ENCODE measurements at regions of chr12 and their contacts with region 1.

Region 1: GRCh38 chr12:57726151-57726883 is 12.2 kb downstream of the AGAP2 start:
- DNase-seq: peak; percentile 65 to 95
- H3K4me3 ChIP-seq: peak overlapping the region; percentile 51 to 82 (median 65)
- H3K27ac ChIP-seq: no peak overlapping the region
- H3K4me1 ChIP-seq: peaks cover 0 to 20% (median 13%) of the 10 kb centered on the region in 4 experiments; a peak in 5 of 7 replicates
- H3K27me3 ChIP-seq: peaks cover 19 to 70% (median 50%) of the 10 kb centered on the region in 4 experiments
- CTCF ChIP-seq: peak; percentile 70 to 85 (median 81)
- EP300 ChIP-seq: no peak
- POLR2A ChIP-seq: no peak
- RAD21 ChIP-seq: peak; percentile 43 to 63; a peak in 3 of 4 replicates

Region 2: DNA sequence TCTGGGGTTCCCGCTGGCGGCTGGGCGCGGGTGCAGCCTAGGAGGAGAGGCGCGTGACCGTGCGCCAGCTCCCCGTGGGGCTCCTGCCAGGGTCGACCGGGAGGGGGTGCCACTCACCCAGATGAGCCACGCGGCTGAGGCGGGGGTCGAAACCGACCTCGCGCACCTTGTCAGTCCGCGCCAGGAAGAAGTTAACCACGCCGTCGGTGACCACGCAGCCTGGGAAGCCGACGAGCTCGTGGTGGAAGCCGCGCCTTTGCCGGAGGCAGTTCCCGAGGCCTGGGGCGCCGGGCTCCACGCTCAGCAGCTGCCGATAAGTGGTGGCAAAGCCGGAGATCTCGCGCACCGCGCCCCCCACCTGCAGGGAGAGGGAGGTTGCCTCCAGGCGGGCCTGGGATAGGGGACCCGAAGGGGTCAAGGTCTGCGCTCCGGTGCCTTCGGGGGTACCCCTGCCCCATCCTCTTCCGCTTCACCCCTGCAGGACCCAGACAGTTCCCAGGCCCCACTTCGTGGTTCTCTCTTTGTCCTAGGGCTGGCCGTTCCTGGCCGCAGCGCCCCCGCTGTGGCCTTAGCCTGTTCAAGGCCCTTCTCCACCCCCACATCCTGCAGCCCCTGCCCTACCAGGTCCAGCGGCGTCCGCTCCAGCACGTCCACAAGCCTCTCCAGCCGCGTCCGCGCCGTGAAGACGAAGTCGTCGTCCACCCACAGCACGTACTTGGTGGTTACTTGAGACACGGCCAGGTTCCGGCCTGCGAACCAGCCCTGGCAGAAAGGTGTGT is 98.6 kb before region 1 on chr12:
- CTCF ChIA-PET with region 1: interaction called, 15 read pairs
- POLR2A ChIA-PET with region 1: interaction called, 4 read pairs
- DNase-seq: peak in 1 of 2 experiments; percentile 73
- H3K4me3 ChIP-seq: peak overlapping the region; percentile 2 to 53 (median 32); a peak in 5 of 8 replicates
- H3K27ac ChIP-seq: no peak overlapping the region
- H3K4me1 ChIP-seq: peaks cover 0 to 20% (median 16%) of the 10 kb centered on the region in 4 experiments; a peak in 6 of 7 replicates
- H3K27me3 ChIP-seq: peaks cover 92 to 100% (median 99%) of the 10 kb centered on the region in 4 experiments
- CTCF ChIP-seq: peak in 2 of 3 experiments; percentile 35 to 37; a peak in 3 of 4 replicates
- EP300 ChIP-seq: no peak
- POLR2A ChIP-seq: no peak
- RAD21 ChIP-seq: peak; percentile 36 to 41

Region 3: GRCh38 chr12:57632694-57633477 is 93.4 kb before region 1 on chr12 and contains the start of gene B4GALNT1:
- CTCF ChIA-PET with region 1: interaction called, 15 read pairs
- POLR2A ChIA-PET with region 1: interaction called, 4 read pairs
- DNase-seq: peak in 1 of 2 experiments; percentile 85
- H3K4me3 ChIP-seq: peak within 1 kb of the TSS; percentile 43 to 83 (median 54)
- H3K27ac ChIP-seq: no peak within 1 kb of the TSS
- H3K4me1 ChIP-seq: peaks cover 0 to 13% (median 9%) of the 10 kb centered on the region in 4 experiments; a peak in 6 of 7 replicates
- H3K27me3 ChIP-seq: peaks cover 49 to 68% (median 63%) of the 10 kb centered on the region in 4 experiments
- CTCF ChIP-seq: peak in 2 of 3 experiments; percentile 84 to 90; a peak in 3 of 4 replicates
- EP300 ChIP-seq: no peak
- POLR2A ChIP-seq: no peak
- RAD21 ChIP-seq: peak; percentile 44 to 58; a peak in 3 of 4 replicates
- total RNA-seq, gene B4GALNT1: 1.4 and 1.5 TPM in 2 replicates

Region 4: DNA sequence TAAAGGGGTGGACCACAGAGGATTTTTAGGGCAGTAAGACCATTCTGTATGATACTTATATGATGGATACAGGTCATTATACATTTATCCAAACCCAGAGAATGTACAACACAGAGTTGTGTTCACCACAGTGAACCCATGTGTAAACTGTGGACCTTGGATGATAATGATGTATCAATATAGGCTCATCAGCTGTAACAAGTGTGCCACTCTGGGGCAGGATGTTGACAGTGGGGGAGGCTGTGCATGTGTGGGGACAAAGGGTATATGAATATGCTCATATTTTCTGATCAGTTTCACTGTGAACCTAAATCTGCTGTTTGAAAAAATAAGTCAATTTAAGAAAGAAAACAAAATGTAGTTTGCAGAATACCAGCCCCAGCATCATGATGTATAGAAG is 46.6 kb before region 1 on chr12:
- CTCF ChIA-PET with region 1: no interaction called
- POLR2A ChIA-PET with region 1: no interaction called
- DNase-seq: no peak
- H3K4me3 ChIP-seq: no peak overlapping the region
- H3K27ac ChIP-seq: no peak overlapping the region
- H3K4me1 ChIP-seq: no peaks in the 10 kb centered on the region
- H3K27me3 ChIP-seq: no peaks in the 10 kb centered on the region
- CTCF ChIP-seq: no peak
- EP300 ChIP-seq: no peak
- POLR2A ChIP-seq: no peak
- RAD21 ChIP-seq: no peak

Region 5: DNA sequence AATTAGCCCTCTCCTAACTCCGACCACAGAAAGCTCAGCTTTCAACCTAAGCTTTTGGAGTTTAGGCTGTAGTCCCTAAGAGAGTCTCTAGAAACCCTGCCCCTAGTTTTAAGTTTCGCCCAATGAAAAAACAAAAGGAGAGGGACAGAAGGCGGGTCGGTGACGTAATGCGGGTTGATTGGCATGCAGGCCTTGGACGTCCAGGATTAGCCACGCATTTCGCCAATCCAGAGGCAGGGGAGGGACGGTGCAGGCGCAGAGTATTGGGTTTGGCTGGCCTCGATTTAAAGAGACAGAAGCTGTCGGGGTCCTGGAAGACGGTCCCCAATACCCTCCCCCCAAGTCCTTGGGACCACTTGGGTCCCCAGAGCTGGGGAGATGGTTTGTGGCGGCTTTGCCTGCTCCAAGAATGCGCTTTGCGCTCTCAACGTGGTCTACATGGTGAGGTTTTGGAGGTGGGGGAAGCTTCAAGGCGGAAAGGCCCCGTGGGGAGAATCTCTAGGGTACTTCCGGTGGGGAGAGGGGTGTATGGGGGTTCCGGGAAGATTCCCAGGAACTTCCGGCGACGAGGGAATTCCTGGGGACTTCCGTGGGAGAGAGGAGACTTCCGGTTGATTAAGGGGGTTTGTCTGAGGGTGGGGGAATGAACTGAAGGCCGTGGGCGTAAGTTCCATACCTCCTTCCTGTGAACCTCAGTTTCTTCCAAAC is 18.6 kb after region 1 on chr12 and contains the start of gene TSPAN31:
- CTCF ChIA-PET with region 1: interaction called, 149 read pairs
- POLR2A ChIA-PET with region 1: interaction called, 10 read pairs
- DNase-seq: peak; percentile 91
- H3K4me3 ChIP-seq: peak within 1 kb of the TSS; percentile 66 to 85 (median 74)
- H3K27ac ChIP-seq: peak within 1 kb of the TSS; percentile 89
- H3K4me1 ChIP-seq: peaks cover 0 to 5% (median 4%) of the 10 kb centered on the region in 4 experiments; a peak in 5 of 7 replicates
- H3K27me3 ChIP-seq: peaks cover 6 to 21% (median 17%) of the 10 kb centered on the region in 4 experiments
- CTCF ChIP-seq: no peak
- EP300 ChIP-seq: no peak; a peak in 1 of 3 replicates
- POLR2A ChIP-seq: peak; percentile 85 to 95
- RAD21 ChIP-seq: no peak
- total RNA-seq, gene TSPAN31: 15.2 and 15.8 TPM in 2 replicates

Region 6: DNA sequence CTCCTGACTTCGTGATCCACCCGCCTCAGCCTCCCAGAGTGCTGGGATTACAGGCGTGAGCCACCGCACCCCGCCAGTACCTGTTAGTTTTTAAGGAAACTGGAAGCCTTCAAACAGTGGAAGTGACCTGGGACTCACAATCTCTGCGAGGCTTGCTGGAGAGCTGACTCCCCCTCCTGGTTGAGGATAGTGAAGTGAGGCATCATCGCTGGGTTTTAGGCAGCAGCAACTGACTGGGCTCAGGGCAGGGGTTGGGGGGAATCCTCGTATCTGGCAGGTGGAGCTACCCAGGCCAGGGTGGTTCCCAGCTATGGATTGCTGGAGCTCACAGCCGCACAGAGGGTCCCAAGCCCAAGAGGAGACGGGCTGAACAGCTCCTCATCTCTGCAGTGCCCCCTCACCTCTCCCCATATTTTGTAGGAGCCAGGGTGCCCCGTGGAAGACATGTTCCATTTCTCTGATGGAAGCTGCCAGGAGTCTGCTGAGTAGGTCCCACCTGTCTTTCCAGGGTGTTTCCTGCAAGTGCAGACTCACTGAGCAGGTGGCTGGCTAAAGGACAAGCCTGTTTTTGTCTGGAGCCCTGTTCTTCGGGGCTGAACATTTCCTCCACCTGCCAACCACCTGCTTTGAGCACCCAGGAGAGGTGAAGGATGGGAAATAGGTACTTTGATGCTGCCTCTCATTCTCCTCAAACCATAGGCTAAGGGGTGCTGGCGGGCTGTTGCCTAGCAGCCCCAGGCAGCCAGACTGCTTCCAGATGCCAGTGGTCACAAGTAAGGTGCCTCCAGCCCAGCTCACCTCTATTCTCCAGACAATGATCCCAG is 89.1 kb after region 1 on chr12:
- CTCF ChIA-PET with region 1: no interaction called
- POLR2A ChIA-PET with region 1: no interaction called
- DNase-seq: peak; percentile 50 to 62
- H3K4me3 ChIP-seq: no peak overlapping the region
- H3K27ac ChIP-seq: no peak overlapping the region
- H3K4me1 ChIP-seq: no peaks in the 10 kb centered on the region
- H3K27me3 ChIP-seq: no peaks in the 10 kb centered on the region
- CTCF ChIP-seq: peak; percentile 63 to 70 (median 67)
- EP300 ChIP-seq: no peak
- POLR2A ChIP-seq: no peak
- RAD21 ChIP-seq: peak; percentile 57 to 70

Region 7: DNA sequence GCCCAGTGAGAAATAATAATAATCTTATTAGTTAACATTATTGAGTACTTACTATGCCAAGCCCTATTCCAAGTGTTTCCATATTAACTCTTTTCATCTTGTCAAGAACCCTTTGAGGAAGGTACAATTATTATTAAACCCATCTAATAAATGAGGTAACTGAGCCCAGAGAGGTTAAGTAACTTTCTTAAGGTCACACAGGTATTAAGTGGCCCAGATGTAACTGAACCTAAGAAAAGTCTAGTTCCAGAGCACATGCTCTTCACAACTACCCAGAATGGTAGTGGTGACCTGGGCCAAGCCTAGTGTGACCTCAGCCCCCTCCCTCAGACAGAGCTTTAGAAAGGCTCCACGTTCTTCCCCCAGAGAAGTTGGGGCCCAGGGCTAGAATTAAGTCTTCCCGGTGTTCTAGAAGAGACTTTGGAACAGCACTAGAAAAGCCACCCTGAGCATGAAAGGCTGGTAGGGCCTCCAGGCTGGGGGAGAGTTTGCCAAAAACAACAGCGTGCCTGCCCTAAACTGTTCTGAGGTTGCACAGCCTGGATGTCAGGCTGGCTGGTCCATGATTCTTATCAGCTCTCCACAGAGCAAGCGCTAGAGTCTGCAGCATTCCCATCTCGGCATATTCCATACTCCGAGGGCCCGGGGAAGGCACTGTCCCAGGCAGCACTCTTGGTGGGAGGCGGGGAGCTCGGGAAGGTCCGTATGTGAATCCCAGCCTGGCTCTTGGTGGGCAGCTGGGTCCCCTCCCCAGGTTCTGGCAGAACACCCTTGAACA is 161.5 kb after region 1 on chr12:
- CTCF ChIA-PET with region 1: no interaction called
- POLR2A ChIA-PET with region 1: no interaction called
- DNase-seq: no peak
- H3K4me3 ChIP-seq: peak overlapping the region in 2 of 4 experiments; percentile 4 to 23; a peak in 3 of 8 replicates
- H3K27ac ChIP-seq: no peak overlapping the region
- H3K4me1 ChIP-seq: peaks cover 2 to 18% (median 14%) of the 10 kb centered on the region in 4 experiments
- H3K27me3 ChIP-seq: no peaks in the 10 kb centered on the region; a peak in 1 of 7 replicates
- CTCF ChIP-seq: no peak
- EP300 ChIP-seq: no peak
- POLR2A ChIP-seq: no peak
- RAD21 ChIP-seq: no peak